ENCODE measurements at regions of chr15 and their contacts with region 1.

Region 1: DNA sequence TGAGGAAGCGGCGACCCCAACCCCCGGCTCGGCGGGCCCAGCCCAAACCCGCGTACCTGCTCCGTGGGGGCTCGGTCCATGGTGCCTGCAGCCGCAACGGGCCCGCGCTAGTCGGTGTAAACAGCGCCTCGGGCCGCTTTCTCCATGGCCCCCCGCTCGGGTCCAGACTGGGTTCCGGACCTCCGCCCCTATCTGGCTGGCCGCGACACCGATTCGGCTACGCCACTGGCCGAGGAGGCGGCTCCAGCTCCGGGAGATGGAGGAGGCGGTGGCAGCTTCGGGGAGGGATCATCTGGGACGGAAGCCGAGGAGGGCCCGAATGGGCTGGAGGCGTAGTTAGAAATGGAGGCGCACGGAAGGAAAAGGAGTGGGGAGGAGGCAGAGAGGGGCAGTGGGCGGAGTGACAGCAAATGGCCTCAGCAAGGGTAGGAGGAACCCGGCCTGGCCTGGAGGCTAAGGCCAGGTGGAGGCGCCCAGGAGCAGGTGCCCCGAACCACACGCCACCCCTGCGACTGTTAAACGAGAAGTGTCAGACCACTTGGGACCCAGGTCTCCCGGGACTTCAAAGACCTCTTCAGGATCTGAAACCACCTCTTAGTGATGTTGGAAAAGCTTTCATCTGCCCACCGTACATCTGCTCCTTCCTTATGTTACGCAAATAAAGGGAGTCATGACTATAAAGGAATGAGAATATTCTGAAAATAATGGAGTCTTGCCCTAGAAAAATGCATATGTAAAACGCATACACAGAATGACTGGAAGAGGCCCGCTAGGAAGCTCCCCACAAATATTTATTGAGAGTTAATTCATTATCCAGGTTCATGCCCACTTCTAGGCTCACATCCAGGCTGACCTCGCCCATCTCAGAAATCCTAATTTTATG is at the start of gene SECISBP2L:
- DNase-seq: peak; percentile 95 to 97 (median 96)
- ATAC-seq: peak; percentile 96 to 99 (median 98)
- H3K4me3 ChIP-seq: peak within 1 kb of the TSS; percentile 57 to 99 (median 96)
- H3K27ac ChIP-seq: peak within 1 kb of the TSS; percentile 26 to 93 (median 90)
- H3K4me1 ChIP-seq: peaks cover 3 to 42% (median 27%) of the 10 kb centered on the region in 12 donors
- H3K27me3 ChIP-seq: no peaks in the 10 kb centered on the region
- CTCF ChIP-seq: peak in 9 of 12 donors; percentile 12 to 60 (median 33)
- POLR2A ChIP-seq: peak in 1 of 2 donors; percentile 83
- total RNA-seq, gene SECISBP2L: 25.5 to 52.4 (median 45.3) TPM

Region 2: GRCh38 chr15:48975472-48976419 is 70.7 kb before region 1 on chr15:
- intact Hi-C with region 1: no loop called
- DNase-seq: peak; percentile 76 to 91 (median 84)
- ATAC-seq: peak; percentile 60 to 99 (median 96)
- H3K4me3 ChIP-seq: peak overlapping the region; percentile 21 to 78 (median 60)
- H3K27ac ChIP-seq: peak overlapping the region; percentile 33 to 86 (median 70)
- H3K4me1 ChIP-seq: peaks cover 0 to 13% (median 9%) of the 10 kb centered on the region in 12 donors
- H3K27me3 ChIP-seq: no peaks in the 10 kb centered on the region
- CTCF ChIP-seq: peak; percentile 83 to 99 (median 96)
- POLR2A ChIP-seq: no peak

Region 3: GRCh38 chr15:49110158-49110944 is 63.9 kb after region 1 on chr15:
- intact Hi-C with region 1: loop called in 1 of 10 experiments (anchors 10 kb)
- DNase-seq: no peak
- ATAC-seq: peak in 2 of 4 donors; percentile 30 to 34
- H3K4me3 ChIP-seq: no peak overlapping the region
- H3K27ac ChIP-seq: no peak overlapping the region
- H3K4me1 ChIP-seq: peaks cover 0 to 4% (median 0%) of the 10 kb centered on the region in 12 donors
- H3K27me3 ChIP-seq: no peaks in the 10 kb centered on the region
- CTCF ChIP-seq: no peak
- POLR2A ChIP-seq: no peak

Region 4: DNA sequence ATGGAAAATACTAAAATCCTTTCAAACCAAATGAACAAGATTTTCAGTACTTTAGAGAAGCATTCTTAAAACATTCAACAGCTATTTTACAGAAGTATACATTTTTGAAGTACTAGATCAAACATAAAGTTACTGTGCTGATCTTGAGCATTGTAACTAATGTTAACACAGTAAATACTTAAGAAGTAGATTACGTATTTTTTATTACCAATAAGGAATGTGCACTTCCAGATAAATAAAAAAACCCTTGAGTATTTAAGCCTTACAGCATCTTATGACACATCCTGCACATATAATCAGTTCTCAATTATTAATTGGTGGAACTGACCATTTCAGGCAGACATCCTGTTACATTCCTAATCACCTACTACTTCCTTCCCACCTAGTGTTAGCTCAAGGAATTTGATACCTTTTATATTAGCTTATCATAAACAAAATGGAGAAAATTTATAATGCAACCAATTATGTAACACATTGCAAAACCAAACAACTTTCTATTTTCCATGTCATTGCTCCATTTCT is 76.1 kb after region 1 on chr15:
- intact Hi-C with region 1: loop called in 2 of 10 experiments (anchors 10 kb)
- DNase-seq: no peak
- ATAC-seq: no peak
- H3K4me3 ChIP-seq: no peak overlapping the region
- H3K27ac ChIP-seq: no peak overlapping the region
- H3K4me1 ChIP-seq: peaks cover 0 to 7% (median 0%) of the 10 kb centered on the region in 12 donors
- H3K27me3 ChIP-seq: no peaks in the 10 kb centered on the region
- CTCF ChIP-seq: no peak
- POLR2A ChIP-seq: no peak

Region 5: DNA sequence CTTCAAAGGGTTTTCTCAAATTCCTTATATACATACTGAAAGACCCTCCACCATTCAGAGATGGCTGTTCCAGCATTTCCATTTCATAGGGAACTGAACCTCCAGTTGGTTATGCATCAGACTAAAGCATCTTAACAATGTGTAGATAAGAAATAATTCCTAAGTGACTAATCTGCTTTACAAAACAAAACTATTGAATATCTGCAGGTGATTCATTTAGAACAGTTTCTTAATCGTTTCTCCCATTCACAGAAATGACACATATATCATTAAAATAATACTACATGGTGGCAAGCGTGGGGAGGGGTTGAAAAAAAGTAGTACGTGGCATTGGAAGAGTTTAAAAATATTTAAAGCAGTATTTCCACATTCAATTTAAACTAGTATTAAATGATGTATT is 89.4 kb after region 1 on chr15:
- intact Hi-C with region 1: loop called in 3 of 10 experiments (anchors 5 to 10 kb)
- DNase-seq: no peak
- ATAC-seq: no peak
- H3K4me3 ChIP-seq: no peak overlapping the region
- H3K27ac ChIP-seq: no peak overlapping the region
- H3K4me1 ChIP-seq: no peaks in the 10 kb centered on the region
- H3K27me3 ChIP-seq: no peaks in the 10 kb centered on the region
- CTCF ChIP-seq: no peak
- POLR2A ChIP-seq: no peak

Region 6: GRCh38 chr15:49155110-49155833 is 108.8 kb after region 1 on chr15 and contains the start of gene COPS2:
- intact Hi-C with region 1: loop called in 1 of 10 experiments (anchors 10 kb)
- DNase-seq: peak; percentile 91 to 95 (median 94)
- ATAC-seq: peak; percentile 98 to 99 (median 99)
- H3K4me3 ChIP-seq: peak within 1 kb of the TSS; percentile 72 to 96 (median 89)
- H3K27ac ChIP-seq: peak within 1 kb of the TSS; percentile 11 to 93 (median 80)
- H3K4me1 ChIP-seq: peaks cover 0 to 52% (median 33%) of the 10 kb centered on the region in 12 donors
- H3K27me3 ChIP-seq: no peaks in the 10 kb centered on the region
- CTCF ChIP-seq: peak in 2 of 12 donors; percentile 12 to 17
- POLR2A ChIP-seq: peak in 1 of 2 donors; percentile 62
- total RNA-seq, gene COPS2: 41.6 to 94.4 (median 82.8) TPM

Region 7: DNA sequence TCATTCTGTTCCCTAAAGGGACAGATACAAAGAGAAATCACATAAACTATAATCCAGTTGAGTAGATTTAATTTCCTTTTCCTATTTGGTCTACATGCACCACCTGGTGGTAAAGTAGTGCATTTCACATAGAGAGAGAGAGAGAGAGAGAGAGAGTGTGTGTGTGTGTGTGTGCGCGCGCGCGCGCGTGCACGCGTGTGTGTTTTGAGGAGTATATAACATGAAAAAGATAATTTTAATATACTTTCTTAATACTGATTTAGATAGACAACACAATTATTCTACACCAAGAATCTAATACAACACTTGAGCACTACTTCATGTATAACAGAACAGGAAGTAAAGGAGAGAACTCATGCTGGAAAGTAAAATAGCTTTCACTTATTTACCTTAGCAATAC is 375.5 kb after region 1 on chr15:
- intact Hi-C with region 1: loop called in 1 of 10 experiments (anchors 10 kb)
- DNase-seq: peak in 3 of 5 donors; percentile 20 to 55 (median 25)
- ATAC-seq: peak in 3 of 4 donors; percentile 52 to 64 (median 62)
- H3K4me3 ChIP-seq: peak overlapping the region in 9 of 12 donors; percentile 19 to 62 (median 32)
- H3K27ac ChIP-seq: peak overlapping the region in 6 of 12 donors; percentile 63 to 77 (median 69)
- H3K4me1 ChIP-seq: peaks cover 0 to 9% (median 0%) of the 10 kb centered on the region in 12 donors
- H3K27me3 ChIP-seq: no peaks in the 10 kb centered on the region
- CTCF ChIP-seq: peak; percentile 50 to 84 (median 67)
- POLR2A ChIP-seq: no peak